ENCODE measurements at regions of chr10 and their contacts with region 1.

Region 1: DNA sequence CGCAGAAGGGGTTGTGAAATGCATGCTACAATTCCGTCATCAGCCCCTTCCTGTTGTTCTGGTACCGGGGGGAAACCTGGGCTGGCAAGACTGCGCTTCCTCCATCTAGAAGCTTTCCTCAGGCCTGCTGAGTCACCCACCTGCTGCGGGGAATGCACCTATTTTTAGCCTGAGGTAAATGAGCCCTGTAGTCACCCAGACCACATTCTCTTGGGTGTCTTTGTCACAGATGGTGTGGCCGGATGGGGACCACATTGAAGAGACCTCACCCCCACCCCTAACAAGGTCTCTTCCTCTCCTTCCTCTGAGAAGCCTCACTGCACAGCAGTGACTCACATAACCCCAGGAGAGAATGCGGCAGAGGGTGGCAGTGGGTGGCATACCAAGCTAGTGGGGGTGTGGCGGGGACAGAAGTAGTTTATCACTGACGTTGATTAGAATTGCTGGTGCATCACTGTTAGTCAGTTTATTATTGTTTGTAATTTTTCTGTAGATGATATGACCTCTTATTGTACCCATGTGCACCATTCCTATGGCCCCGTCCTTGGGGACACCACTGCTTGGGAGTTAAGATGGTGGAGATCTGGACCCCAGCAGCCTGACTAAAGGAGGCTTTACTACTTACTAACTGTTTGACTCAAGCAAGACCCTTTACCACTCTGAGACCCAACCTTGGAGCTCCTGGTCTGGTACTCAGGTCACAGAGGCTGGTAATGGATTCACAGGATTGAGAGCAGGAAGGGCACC is 83.0 kb upstream of the DUSP5 start:
- H3K4me3 Mint-ChIP-seq: no peak overlapping the region
- H3K27ac Mint-ChIP-seq: peak overlapping the region; percentile 34
- H3K4me1 Mint-ChIP-seq: peaks cover 65% of the 10 kb centered on the region
- H3K27me3 Mint-ChIP-seq: peaks cover 12% of the 10 kb centered on the region

Region 2: DNA sequence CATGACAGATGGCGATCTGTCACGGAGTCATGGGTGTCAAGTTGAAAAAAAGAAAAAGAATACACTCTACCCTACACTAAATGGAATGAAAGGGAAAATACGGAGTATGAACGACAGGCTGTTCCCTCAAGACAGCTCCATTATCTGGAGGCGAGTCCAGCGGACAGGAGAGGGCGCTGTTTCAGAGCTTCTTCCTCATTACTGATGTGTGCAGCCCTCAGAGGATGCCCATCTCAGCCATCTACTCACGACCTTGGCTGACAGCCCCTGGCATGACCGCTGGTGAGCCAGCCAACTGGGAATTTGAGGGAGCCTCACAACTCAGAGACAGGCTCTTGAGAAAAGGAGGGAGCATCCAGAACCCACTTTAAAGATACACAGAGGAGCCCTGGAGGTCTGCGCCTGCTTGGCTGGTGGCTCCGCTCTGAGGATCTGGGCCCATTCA is 60.4 kb before region 1 on chr10:
- intact Hi-C with region 1: loop called (anchors 10 kb)
- H3K4me3 Mint-ChIP-seq: no peak overlapping the region
- H3K27ac Mint-ChIP-seq: no peak overlapping the region
- H3K4me1 Mint-ChIP-seq: peaks cover 19% of the 10 kb centered on the region
- H3K27me3 Mint-ChIP-seq: peaks cover 53% of the 10 kb centered on the region

Measured in dendritic cell treated with granulocyte-macrophage colony-stimulating factor and Interleukin-4, amounts not matched to agents 40 ng/mL and 50 ng/mL, for 4 days (primary cell).